Testis (tissue), 5 donors: ENCODE measurements at regions of chr1 and their contacts with region 1.

Region 1: GRCh38 chr1:27603681-27604578 is at the start of gene AHDC1:
- DNase-seq: peak; percentile 95
- H3K4me3 ChIP-seq: peak within 1 kb of the TSS; percentile 85 to 86
- H3K27ac ChIP-seq: peak within 1 kb of the TSS; percentile 91 to 94
- H3K4me1 ChIP-seq: peaks cover 36% of the 10 kb centered on the region
- H3K27me3 ChIP-seq: no peaks in the 10 kb centered on the region
- CTCF ChIP-seq: peak in 1 of 3 experiments; percentile 67
- POLR2A ChIP-seq: peak; percentile 34
- total RNA-seq, gene AHDC1: 73.7 to 86.8 TPM

Region 2: DNA sequence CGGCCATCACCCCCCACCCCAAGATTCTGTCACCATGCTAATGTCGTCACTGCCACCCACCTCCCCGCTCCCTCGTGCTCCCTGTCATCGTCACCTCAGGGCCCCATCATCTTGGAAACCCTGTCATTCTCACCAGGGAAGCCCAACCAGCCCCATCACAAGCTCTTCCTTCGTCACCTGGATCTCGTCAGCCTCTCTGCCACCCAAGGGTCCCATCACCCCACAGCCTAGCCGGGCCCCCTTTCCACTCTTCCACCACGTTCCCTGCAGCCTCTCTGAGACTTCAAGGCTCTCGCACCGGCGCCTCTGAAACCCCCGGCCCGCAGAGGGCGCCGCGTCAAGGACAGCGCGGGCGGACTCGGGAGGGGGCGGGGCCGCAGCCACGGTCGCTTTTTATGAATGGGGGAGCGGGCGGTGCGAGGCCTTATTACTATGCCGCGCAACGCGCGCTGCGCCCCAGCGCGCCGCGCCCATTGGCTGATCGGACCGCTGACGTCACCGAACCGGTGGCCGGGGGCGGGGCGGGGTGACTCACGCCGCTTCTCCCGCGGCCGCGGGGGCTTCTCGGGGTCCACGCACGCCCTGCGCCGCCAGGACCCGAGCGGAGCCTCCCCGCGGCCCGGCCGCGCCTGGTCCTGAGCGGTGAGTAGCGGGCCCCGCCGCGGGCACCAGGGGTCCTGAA is 211.7 kb before region 1 on chr1 and contains the start of gene GPR3:
- intact Hi-C with region 1: loop called (anchors 10 kb)
- DNase-seq: peak; percentile 94
- H3K4me3 ChIP-seq: peak within 1 kb of the TSS; percentile 48 to 54
- H3K27ac ChIP-seq: no peak within 1 kb of the TSS
- H3K4me1 ChIP-seq: peaks cover 17% of the 10 kb centered on the region
- H3K27me3 ChIP-seq: no peaks in the 10 kb centered on the region
- CTCF ChIP-seq: peak; percentile 26 to 37 (median 36)
- POLR2A ChIP-seq: no peak
- total RNA-seq, gene GPR3: 0.12 to 0.47 TPM

Region 3: DNA sequence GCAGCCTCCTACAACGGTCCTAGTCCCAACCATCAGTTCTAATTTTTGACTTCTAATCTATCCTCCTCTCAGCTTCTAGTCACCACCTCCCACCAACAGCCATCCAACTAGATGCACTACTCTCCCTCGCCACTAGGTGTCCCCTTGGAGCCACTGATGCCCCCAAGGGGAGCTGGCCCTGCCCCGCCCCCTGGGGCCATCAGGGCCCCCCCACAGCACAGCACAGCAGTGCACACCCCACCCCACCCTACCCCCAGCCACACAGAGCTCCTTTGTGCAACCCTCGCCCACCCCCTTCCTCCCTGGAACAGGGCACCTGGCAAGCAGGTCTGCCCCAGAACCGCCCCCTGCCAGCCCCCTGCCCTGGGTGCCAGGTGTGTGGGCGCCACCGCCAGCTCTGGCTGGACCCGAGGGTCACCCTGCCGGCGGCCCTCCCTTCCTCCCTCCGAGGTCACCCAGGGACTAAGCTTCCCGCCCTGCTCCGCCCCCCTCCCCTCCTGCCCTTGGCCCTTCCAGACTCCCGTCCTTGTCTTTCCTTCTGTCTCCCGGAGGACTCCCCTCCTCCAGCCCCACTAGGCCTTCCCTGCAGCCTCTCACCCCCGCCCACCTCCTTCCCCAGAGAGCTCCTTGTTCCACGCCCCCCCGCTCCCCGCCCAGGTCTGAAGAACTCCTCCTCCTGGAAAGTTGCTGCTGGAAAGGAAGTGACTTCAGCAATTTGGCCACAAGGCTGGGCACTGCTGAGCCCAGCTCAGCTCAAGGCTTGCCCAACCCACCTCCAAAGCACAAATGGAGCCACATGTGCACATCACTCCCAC is 46.9 kb before region 1 on chr1:
- intact Hi-C with region 1: loop called (anchors 5 kb)
- DNase-seq: peak; percentile 98
- H3K4me3 ChIP-seq: no peak overlapping the region
- H3K27ac ChIP-seq: peak overlapping the region; percentile 69 to 86
- H3K4me1 ChIP-seq: peaks cover 62% of the 10 kb centered on the region
- H3K27me3 ChIP-seq: no peaks in the 10 kb centered on the region
- CTCF ChIP-seq: peak; percentile 86 to 96 (median 95)
- POLR2A ChIP-seq: no peak

Region 4: GRCh38 chr1:27821761-27822315 is 217.9 kb after region 1 on chr1:
- intact Hi-C with region 1: no loop called
- DNase-seq: no peak
- H3K4me3 ChIP-seq: no peak overlapping the region
- H3K27ac ChIP-seq: no peak overlapping the region
- H3K4me1 ChIP-seq: no peaks in the 10 kb centered on the region
- H3K27me3 ChIP-seq: no peaks in the 10 kb centered on the region
- CTCF ChIP-seq: no peak
- POLR2A ChIP-seq: no peak